GM12878 (cell line): ENCODE measurements at regions of chr11 and their contacts with region 1.

Region 1: GRCh38 chr11:119728651-119729580 is at the start of gene NECTIN1:
- DNase-seq: no peak
- ATAC-seq: peak; percentile 86
- H3K4me3 ChIP-seq: peak within 1 kb of the TSS; percentile 86
- H3K27ac ChIP-seq: peak within 1 kb of the TSS; percentile 58
- H3K4me1 ChIP-seq: peaks cover 24% of the 10 kb centered on the region
- H3K27me3 ChIP-seq: peaks cover 0 to 7% of the 10 kb centered on the region in 2 experiments; a peak in 2 of 4 replicates
- CTCF ChIP-seq: peak; percentile 69 to 94 (median 84)
- EP300 ChIP-seq: no peak
- POLR2A ChIP-seq: peak; percentile 77
- RAD21 ChIP-seq: peak; percentile 83
- polyA plus RNA-seq, gene NECTIN1: 1.4 to 1.5 TPM

Region 2: DNA sequence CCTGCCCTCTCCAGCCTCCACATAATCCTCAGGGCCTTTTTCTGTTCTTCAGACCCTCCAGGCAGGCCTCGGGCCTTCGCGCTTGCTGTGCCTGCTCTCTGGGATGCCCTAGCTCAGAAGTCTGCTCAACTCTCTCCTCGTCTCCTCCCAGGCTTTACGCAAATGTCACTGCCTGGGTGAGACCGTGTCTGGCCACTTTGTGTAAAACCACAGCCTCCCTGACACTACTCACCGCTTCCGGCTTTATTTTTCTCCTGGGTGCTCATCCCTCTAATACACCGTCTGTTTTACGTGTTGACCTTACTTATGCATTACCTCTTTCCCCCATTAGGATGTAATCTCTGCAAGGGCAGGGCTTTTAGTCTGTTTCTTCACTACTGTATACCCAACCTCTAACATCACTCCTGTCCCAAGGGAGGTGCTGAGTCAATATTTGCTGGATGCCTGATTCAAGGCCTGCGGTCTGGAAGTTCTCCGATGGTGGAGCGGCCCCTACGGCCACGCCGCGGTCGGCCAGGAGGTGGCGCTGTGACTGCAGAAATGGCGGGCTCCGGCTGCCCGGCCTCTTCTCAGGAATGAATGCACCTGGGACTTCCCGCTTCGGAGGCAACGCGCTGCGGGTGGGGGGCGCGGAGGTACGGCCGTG is 247.8 kb before region 1 on chr11:
- CTCF ChIA-PET with region 1: interaction called, 5 read pairs
- POLR2A ChIA-PET with region 1: no interaction called
- RAD21 ChIA-PET with region 1: interaction called, 7 read pairs
- SMC1A ChIA-PET with region 1: no interaction called
- in situ Hi-C with region 1: no loop called
- intact Hi-C with region 1: loop called (anchors 5 kb)
- DNase-seq: peak; percentile 31
- ATAC-seq: peak; percentile 89
- H3K4me3 ChIP-seq: no peak overlapping the region
- H3K27ac ChIP-seq: no peak overlapping the region
- H3K4me1 ChIP-seq: no peaks in the 10 kb centered on the region
- H3K27me3 ChIP-seq: no peaks in the 10 kb centered on the region; a peak in 1 of 4 replicates
- CTCF ChIP-seq: peak; percentile 91 to 99 (median 97)
- EP300 ChIP-seq: no peak
- POLR2A ChIP-seq: no peak
- RAD21 ChIP-seq: peak; percentile 93

Region 3: GRCh38 chr11:119666463-119667131 is 62.3 kb before region 1 on chr11:
- CTCF ChIA-PET with region 1: interaction called, 27 read pairs
- POLR2A ChIA-PET with region 1: no interaction called
- RAD21 ChIA-PET with region 1: interaction called, 192 read pairs
- SMC1A ChIA-PET with region 1: interaction called, 4 read pairs
- in situ Hi-C with region 1: no loop called
- intact Hi-C with region 1: loop called (anchors 1 kb)
- DNase-seq: no peak
- ATAC-seq: peak; percentile 100
- H3K4me3 ChIP-seq: no peak overlapping the region
- H3K27ac ChIP-seq: no peak overlapping the region
- H3K4me1 ChIP-seq: no peaks in the 10 kb centered on the region
- H3K27me3 ChIP-seq: no peaks in the 10 kb centered on the region
- CTCF ChIP-seq: peak; percentile 91 to 98 (median 94); a peak in 5 of 6 replicates
- EP300 ChIP-seq: no peak
- POLR2A ChIP-seq: no peak
- RAD21 ChIP-seq: peak; percentile 95

Region 4: DNA sequence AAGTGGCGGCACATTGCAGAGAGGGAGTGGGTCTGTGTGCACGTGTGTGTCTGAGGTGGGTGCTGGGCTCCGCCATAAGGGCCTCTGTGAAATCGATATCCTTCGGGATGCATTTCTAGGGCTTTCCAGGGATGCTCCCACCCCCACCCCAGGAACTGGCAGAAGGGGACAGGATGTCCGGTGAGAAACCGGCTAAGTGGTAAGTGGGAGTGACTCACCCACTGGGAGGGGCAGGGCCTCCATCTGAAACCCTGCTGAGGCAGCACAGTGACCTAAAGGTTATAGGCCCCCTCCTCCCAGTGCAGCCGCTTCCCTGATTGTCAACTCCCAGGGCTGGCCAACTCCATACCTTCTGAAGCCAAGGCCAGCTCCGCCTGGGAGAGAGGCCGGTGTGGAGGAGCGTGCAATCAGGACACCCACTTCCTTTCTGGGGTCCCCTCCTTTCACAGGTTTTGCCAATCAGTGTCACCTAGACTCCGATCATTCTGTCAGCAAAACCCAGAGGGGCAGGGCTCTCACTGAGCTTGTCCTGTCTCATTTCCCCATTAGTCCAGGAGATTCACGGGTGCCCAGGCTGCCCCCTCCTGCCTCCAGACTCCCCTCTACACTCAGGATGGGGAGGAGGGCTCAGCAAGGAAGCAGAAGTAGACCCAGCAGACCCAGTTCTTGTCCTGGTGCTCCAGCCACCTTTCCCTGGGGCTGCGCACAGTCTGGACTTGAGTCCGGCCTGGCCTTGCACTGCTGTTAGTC is 44.4 kb before region 1 on chr11:
- CTCF ChIA-PET with region 1: interaction called, 57 read pairs
- POLR2A ChIA-PET with region 1: interaction called, 3 read pairs
- RAD21 ChIA-PET with region 1: interaction called, 11 read pairs
- SMC1A ChIA-PET with region 1: interaction called, 6 read pairs
- in situ Hi-C with region 1: no loop called
- intact Hi-C with region 1: no loop called
- DNase-seq: no peak
- ATAC-seq: no peak
- H3K4me3 ChIP-seq: no peak overlapping the region
- H3K27ac ChIP-seq: no peak overlapping the region
- H3K4me1 ChIP-seq: peaks cover 5% of the 10 kb centered on the region
- H3K27me3 ChIP-seq: no peaks in the 10 kb centered on the region
- CTCF ChIP-seq: no peak
- EP300 ChIP-seq: no peak
- POLR2A ChIP-seq: no peak
- RAD21 ChIP-seq: no peak

Region 5: DNA sequence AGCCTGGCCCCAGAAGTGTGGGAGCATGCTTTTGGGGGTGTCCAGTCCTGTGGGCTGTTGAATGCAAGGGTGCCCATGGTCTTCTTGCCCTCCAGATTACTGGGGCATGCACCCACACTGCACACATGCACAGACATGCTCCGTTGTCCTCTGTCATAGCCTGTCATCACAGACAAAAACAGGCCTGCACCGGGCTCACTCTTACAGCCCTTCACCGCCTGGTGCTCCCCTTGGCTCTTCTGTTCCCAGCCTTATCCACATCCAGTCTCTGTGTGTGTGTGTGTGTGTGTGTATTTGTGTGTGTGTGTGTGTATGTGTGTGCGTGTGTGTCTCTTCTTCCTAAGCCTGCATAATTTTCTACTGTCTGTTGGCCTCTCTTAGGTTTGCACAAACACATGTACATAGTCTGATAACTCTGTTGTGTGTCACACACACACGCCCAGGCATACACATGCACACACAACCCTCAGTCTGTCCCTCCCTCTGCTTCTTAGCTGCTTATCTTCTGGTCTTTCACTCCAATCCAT is 23.5 kb after region 1 on chr11:
- CTCF ChIA-PET with region 1: interaction called, 58 read pairs
- POLR2A ChIA-PET with region 1: interaction called, 16 read pairs
- RAD21 ChIA-PET with region 1: interaction called, 16 read pairs
- SMC1A ChIA-PET with region 1: interaction called, 17 read pairs
- in situ Hi-C with region 1: no loop called
- intact Hi-C with region 1: no loop called
- DNase-seq: no peak
- ATAC-seq: peak; percentile 80
- H3K4me3 ChIP-seq: peak overlapping the region; percentile 62
- H3K27ac ChIP-seq: peak overlapping the region; percentile 90
- H3K4me1 ChIP-seq: peaks cover 21% of the 10 kb centered on the region
- H3K27me3 ChIP-seq: no peaks in the 10 kb centered on the region
- CTCF ChIP-seq: peak in 1 of 3 experiments; percentile 20; a peak in 1 of 6 replicates
- EP300 ChIP-seq: no peak
- POLR2A ChIP-seq: no peak
- RAD21 ChIP-seq: peak; percentile 31; the same call in 1 of the 2 replicates